ENCODE measurements at regions of chr15 and their contacts with region 1.

Region 1: DNA sequence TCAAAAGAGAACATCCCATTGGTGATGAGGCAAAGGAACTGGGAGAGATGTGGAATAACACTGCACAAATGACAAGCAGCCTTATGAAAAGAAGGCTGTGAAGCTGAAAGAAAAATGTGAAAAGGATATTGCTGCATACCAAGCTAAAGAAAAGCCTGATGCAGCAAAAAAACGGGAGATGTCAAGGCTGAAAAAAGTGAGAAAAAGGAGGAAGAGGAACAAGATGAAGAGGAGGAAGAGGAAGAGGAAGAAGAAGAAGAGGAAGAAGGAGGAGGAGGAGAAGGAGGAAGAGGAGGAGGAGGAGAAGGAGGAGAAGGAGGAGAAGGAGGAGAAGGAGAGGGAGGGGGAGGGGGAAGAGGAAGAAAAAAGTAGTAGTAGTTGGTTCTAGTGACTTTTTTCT is 41.8 kb upstream of the TEX9 start:
- DNase-seq: no peak
- H3K4me3 ChIP-seq: no peak overlapping the region
- H3K27ac ChIP-seq: no peak overlapping the region
- H3K4me1 ChIP-seq: no peaks in the 10 kb centered on the region
- H3K27me3 ChIP-seq: no peaks in the 10 kb centered on the region
- CTCF ChIP-seq: no peak
- POLR2A ChIP-seq: no peak

Region 2: GRCh38 chr15:56307126-56307525 is 16.3 kb before region 1 on chr15:
- intact Hi-C with region 1: loop called (anchors 2 kb)
- DNase-seq: no peak
- H3K4me3 ChIP-seq: no peak overlapping the region
- H3K27ac ChIP-seq: no peak overlapping the region
- H3K4me1 ChIP-seq: no peaks in the 10 kb centered on the region
- H3K27me3 ChIP-seq: no peaks in the 10 kb centered on the region
- CTCF ChIP-seq: no peak
- POLR2A ChIP-seq: no peak